ENCODE measurements at regions of chr15 and their contacts with region 1.

Region 1: GRCh38 chr15:78049691-78050440 is 27.6 kb downstream of the TBC1D2B start:
- DNase-seq: peak; percentile 91
- ATAC-seq: peak; percentile 75
- H3K4me3 ChIP-seq: no peak overlapping the region
- H3K27ac ChIP-seq: peak overlapping the region; percentile 25
- H3K4me1 ChIP-seq: peaks cover 33% of the 10 kb centered on the region
- H3K27me3 ChIP-seq: no peaks in the 10 kb centered on the region
- CTCF ChIP-seq: no peak
- POLR2A ChIP-seq: no peak
- RAD21 ChIP-seq: no peak; the same call in 1 of the 2 replicates

Region 2: DNA sequence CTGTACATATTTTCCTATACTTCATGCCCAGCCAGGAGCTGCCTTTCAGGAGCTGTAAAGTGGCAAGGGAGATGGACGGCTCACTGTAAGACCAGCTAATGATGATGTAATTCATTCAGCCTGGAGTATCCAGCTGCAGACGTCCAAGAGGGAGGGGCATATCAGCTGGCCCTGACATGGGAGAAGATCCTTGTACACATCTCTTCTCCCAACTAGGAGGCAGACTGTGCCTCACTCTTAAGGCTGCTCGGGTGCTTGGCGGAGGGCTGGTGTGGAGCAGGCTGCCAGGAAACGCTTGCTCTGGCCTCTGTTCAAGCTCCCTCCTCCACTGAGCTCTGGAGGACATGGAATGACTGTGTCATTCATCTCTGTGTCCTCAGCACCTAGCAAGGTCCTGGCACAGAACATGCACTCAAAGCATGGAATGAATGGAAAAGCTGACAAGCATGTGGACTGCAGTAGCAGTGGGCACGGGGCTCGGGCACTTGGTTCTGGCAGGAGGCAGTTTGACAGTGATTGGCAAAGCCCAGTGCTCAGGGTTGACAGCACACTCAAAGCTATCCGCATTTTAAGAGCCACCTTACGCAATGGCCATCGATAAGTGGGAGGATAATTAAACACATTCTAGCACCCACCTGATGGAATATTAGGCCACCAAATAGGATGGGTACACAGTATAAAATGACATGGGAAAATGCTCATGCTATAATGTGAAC is 44.8 kb before region 1 on chr15:
- CTCF ChIA-PET with region 1: no interaction called
- POLR2A ChIA-PET with region 1: no interaction called
- dilution Hi-C with region 1: no loop called
- in situ Hi-C with region 1: no loop called
- intact Hi-C with region 1: loop called (anchors 5 kb)
- DNase-seq: peak; percentile 95
- ATAC-seq: peak; percentile 86
- H3K4me3 ChIP-seq: no peak overlapping the region
- H3K27ac ChIP-seq: no peak overlapping the region
- H3K4me1 ChIP-seq: peaks cover 18% of the 10 kb centered on the region
- H3K27me3 ChIP-seq: no peaks in the 10 kb centered on the region
- CTCF ChIP-seq: peak; percentile 43
- POLR2A ChIP-seq: no peak
- RAD21 ChIP-seq: peak; percentile 50

Region 3: DNA sequence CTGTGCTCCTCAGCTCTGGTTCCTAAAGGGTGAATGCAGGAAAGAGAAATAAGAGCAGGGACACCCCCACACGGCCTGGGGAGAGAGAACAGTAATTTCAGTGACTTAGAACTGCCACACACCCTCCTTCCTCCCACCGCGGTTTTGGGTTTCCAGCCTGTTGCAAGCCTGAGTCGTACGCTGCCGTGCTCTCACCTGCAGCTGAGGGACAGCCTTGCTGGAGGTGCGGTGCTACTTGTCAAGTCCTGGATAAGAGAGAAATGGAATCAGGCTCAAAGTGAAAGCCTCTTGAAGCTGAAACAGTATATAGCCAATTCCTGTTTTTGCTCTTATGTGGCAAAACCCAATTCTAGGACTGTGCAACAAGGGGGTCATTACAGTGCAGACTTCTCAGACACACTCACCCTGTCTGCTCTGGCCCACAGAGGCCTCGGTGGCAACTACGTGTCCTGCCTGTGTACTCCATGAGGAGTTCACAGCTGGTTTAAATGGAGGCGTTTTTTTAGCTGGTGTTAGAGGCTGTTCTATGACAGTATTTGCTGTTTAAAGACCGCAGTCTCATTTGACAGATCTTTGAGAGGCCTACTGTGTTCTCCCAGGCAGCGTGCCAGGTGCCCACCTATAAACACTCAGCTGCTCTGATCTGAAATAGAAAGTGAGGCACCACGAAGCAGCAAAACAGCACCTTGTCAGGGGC is 15.2 kb before region 1 on chr15:
- CTCF ChIA-PET with region 1: interaction called, 3 read pairs
- POLR2A ChIA-PET with region 1: no interaction called
- dilution Hi-C with region 1: no loop called
- in situ Hi-C with region 1: no loop called
- intact Hi-C with region 1: loop called (anchors 2 kb)
- DNase-seq: peak; percentile 38
- ATAC-seq: peak; percentile 41; the same call in 1 of the 2 replicates
- H3K4me3 ChIP-seq: no peak overlapping the region
- H3K27ac ChIP-seq: peak overlapping the region; percentile 8; the same call in 1 of the 2 replicates
- H3K4me1 ChIP-seq: peaks cover 15% of the 10 kb centered on the region
- H3K27me3 ChIP-seq: no peaks in the 10 kb centered on the region
- CTCF ChIP-seq: no peak
- POLR2A ChIP-seq: no peak
- RAD21 ChIP-seq: no peak

Region 4: GRCh38 chr15:78065284-78065872 is 15.5 kb after region 1 on chr15:
- CTCF ChIA-PET with region 1: interaction called, 3 read pairs
- POLR2A ChIA-PET with region 1: no interaction called
- dilution Hi-C with region 1: no loop called
- in situ Hi-C with region 1: no loop called
- intact Hi-C with region 1: loop called (anchors 2 kb)
- DNase-seq: peak; percentile 99
- ATAC-seq: peak; percentile 84
- H3K4me3 ChIP-seq: peak overlapping the region; percentile 8; the same call in 1 of the 2 replicates
- H3K27ac ChIP-seq: peak overlapping the region; percentile 95
- H3K4me1 ChIP-seq: peaks cover 51% of the 10 kb centered on the region
- H3K27me3 ChIP-seq: no peaks in the 10 kb centered on the region
- CTCF ChIP-seq: no peak
- POLR2A ChIP-seq: peak; percentile 69
- RAD21 ChIP-seq: no peak

Region 5: DNA sequence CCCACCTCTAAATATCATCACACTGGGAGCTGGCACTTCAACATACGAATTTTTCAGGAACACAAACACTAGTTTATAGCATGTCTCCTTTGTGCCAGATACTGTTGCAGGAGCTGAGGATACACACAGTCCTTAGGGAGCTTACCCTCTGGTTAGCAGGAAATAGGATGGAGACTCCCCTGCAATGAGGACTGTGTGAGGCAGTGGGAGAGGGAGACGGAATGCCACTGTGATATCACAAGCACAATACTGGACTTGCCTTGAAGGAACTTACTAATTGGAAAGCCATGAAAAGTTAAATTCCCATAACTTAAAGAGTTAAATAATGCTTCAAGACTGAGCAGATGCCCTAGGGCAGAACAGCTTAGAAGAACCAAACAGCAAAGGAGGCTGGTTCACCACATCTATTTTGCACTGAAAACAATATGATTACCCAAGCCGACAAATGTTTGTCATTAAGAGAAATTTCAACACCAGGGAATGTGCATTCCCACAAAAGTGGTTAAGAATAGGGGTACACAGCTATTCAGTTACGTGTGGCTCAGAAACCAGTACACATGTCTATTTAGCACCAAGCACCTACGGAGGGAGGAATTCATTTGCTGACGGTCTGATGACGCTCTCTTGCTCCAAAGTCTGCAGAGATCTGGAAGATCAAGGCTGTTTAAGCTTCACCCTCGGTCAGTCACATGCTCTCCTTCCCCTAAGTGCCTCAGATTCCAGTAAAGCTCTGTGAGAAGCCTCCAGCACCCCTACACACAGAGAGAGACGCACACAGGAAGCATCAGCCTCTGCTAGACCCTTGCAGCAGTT is 22.4 kb after region 1 on chr15:
- CTCF ChIA-PET with region 1: interaction called, 3 read pairs
- POLR2A ChIA-PET with region 1: no interaction called
- dilution Hi-C with region 1: no loop called
- in situ Hi-C with region 1: no loop called
- intact Hi-C with region 1: loop called (anchors 2 kb)
- DNase-seq: peak; percentile 66
- ATAC-seq: peak; percentile 1; the same call in 1 of the 2 replicates
- H3K4me3 ChIP-seq: no peak overlapping the region
- H3K27ac ChIP-seq: peak overlapping the region; percentile 65; the same call in 1 of the 2 replicates
- H3K4me1 ChIP-seq: peaks cover 36% of the 10 kb centered on the region
- H3K27me3 ChIP-seq: no peaks in the 10 kb centered on the region
- CTCF ChIP-seq: no peak
- POLR2A ChIP-seq: no peak
- RAD21 ChIP-seq: no peak

Region 6: DNA sequence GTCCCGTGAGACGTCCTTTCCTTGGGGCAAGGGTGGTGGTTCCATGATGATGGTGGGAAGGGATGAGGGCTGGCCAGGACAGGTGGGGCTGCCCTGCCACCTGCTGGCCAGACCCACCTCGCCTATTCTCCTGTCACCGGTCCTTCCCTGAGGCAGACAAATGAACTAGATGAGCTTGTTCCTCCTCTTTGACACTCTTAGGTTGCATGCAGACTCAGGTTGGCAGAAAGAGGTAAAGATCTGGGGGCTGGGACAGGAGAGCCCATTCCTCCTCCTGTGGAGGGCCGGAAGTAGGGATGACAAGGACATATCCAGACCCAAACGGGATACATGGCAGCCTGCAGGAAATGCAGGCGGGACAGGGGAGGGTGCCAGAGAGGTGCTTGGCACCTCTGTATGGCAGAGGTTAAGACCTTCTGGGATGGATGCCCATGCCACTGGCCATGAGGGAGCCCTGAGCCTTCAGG is 145.9 kb after region 1 on chr15:
- CTCF ChIA-PET with region 1: no interaction called
- POLR2A ChIA-PET with region 1: no interaction called
- dilution Hi-C with region 1: no loop called
- in situ Hi-C with region 1: no loop called
- intact Hi-C with region 1: no loop called
- DNase-seq: no peak
- ATAC-seq: peak; percentile 46; the same call in 1 of the 2 replicates
- H3K4me3 ChIP-seq: no peak overlapping the region
- H3K27ac ChIP-seq: no peak overlapping the region
- H3K4me1 ChIP-seq: no peaks in the 10 kb centered on the region
- H3K27me3 ChIP-seq: peaks cover 35% of the 10 kb centered on the region
- CTCF ChIP-seq: peak; percentile 47
- POLR2A ChIP-seq: no peak
- RAD21 ChIP-seq: peak; percentile 53

Measured in IMR-90 (cell line).